ENCODE measurements at regions of chr12 and their contacts with region 1.

Region 1: GRCh38 chr12:54993161-54993835 is 8.7 kb upstream of the TESPA1 start:
- DNase-seq: peak in 8 of 9 donors; percentile 42 to 83 (median 70)
- ATAC-seq: peak; percentile 91
- H3K4me3 ChIP-seq: no peak overlapping the region
- H3K4me3 Mint-ChIP-seq: peak overlapping the region in 4 of 10 donors; percentile 13 to 43 (median 29)
- H3K27ac ChIP-seq: peak overlapping the region; percentile 66
- H3K27ac Mint-ChIP-seq: peak overlapping the region in 8 of 9 donors; percentile 15 to 98 (median 71)
- H3K4me1 ChIP-seq: peaks cover 23 to 37% of the 10 kb centered on the region in 2 donors
- H3K4me1 Mint-ChIP-seq: peaks cover 34 to 59% (median 47%) of the 10 kb centered on the region in 7 donors
- H3K27me3 ChIP-seq: no peaks in the 10 kb centered on the region
- H3K27me3 Mint-ChIP-seq: peaks cover 0 to 4% (median 0%) of the 10 kb centered on the region in 5 donors

Region 2: DNA sequence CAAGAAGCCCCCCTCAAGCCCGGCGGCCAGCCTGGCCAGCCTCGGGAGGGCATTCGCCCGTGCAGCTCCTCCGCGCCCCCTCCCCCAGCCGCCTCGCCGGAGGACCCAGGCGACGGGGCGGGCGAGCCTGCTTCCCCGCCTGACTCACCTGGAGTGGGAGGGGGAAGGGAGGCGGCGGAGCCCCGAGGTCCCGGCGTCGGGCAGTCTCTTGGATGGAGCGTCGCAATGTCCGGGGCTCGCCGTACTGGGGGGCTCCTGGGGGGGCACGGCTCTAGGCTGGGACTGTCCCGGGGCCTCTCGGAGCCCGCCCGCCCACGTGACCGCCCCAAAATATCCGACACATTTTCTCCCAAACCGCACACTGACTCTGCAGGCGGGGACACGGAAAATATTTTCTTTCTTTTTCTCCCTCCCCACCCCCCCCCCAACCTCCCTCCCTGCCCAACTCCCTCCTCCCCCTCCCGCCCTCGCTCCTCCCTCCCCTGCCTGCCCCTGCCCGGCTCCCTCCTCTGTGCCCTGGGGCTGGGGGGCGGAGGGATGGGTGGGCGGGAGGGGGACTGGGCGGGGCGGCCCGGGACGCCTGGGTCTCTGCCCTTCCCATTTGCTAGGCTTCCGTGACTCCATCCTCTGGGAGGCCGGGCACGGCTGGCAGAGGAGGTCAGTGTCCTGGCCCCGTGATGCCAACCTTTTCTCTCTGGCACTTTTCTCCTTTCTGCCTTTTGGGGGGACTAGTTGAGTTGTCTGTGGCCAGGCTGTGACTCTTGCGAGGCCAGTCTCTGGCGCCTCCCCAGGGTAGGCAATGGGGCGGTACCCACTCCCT is 1761.3 kb before region 1 on chr12 and contains the start of gene RARG:
- CTCF ChIA-PET with region 1: no interaction called
- POLR2A ChIA-PET with region 1: no interaction called
- intact Hi-C with region 1: no loop called
- DNase-seq: peak in 3 of 9 donors; percentile 33 to 78 (median 58)
- ATAC-seq: peak; percentile 74
- H3K4me3 ChIP-seq: peak within 1 kb of the TSS; percentile 52
- H3K4me3 Mint-ChIP-seq: peak within 1 kb of the TSS; percentile 83 to 95 (median 88)
- H3K27ac ChIP-seq: peak within 1 kb of the TSS; percentile 56
- H3K27ac Mint-ChIP-seq: peak within 1 kb of the TSS; percentile 77 to 90 (median 86)
- H3K4me1 ChIP-seq: peaks cover 40% of the 10 kb centered on the region in 2 donors
- H3K4me1 Mint-ChIP-seq: peaks cover 38 to 76% (median 67%) of the 10 kb centered on the region in 7 donors
- H3K27me3 ChIP-seq: no peaks in the 10 kb centered on the region
- H3K27me3 Mint-ChIP-seq: no peaks in the 10 kb centered on the region
- total RNA-seq, gene RARG: 22.4 to 73.1 (median 57.4) TPM

Region 3: DNA sequence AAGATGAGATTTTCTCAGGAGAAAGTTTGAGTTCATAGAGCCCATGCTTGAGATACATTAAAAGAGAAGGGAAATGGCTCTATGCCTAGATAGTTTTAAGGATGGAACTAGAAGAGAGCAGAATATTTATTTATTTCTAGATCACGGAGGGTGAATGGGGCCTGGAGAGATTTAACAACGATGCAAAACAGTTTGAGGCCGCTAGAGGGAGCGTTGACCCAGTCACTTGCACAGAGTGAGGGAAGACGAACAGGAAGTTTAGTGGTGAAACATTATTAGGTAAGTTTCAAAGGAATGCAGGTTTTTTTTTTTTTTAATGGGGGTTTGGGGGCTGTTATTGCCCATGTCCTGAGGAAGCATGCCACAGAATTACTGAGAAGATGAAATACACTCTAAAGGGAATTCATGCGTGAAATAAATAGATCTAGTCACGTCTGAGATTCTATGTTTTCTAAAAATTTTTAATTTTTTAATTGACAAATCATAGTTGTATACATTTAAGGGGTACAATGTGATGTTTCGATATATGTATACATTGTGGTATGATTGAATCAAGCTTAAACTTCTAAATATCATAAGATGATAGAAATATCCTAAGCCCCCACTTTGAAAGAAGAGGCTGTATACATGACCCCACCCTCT is 390.0 kb before region 1 on chr12:
- CTCF ChIA-PET with region 1: no interaction called
- POLR2A ChIA-PET with region 1: no interaction called
- intact Hi-C with region 1: loop called in 1 of 2 experiments (anchors 10 kb)
- DNase-seq: peak in 8 of 9 donors; percentile 20 to 68 (median 57)
- ATAC-seq: peak; percentile 93
- H3K4me3 ChIP-seq: no peak overlapping the region
- H3K4me3 Mint-ChIP-seq: peak overlapping the region in 1 of 10 donors; percentile 49
- H3K27ac ChIP-seq: no peak overlapping the region
- H3K27ac Mint-ChIP-seq: peak overlapping the region in 2 of 9 donors; percentile 5 to 33
- H3K4me1 ChIP-seq: no peaks in the 10 kb centered on the region
- H3K4me1 Mint-ChIP-seq: peaks cover 0 to 8% (median 7%) of the 10 kb centered on the region in 7 donors
- H3K27me3 ChIP-seq: no peaks in the 10 kb centered on the region
- H3K27me3 Mint-ChIP-seq: peaks cover 0 to 32% (median 12%) of the 10 kb centered on the region in 5 donors

Region 4: DNA sequence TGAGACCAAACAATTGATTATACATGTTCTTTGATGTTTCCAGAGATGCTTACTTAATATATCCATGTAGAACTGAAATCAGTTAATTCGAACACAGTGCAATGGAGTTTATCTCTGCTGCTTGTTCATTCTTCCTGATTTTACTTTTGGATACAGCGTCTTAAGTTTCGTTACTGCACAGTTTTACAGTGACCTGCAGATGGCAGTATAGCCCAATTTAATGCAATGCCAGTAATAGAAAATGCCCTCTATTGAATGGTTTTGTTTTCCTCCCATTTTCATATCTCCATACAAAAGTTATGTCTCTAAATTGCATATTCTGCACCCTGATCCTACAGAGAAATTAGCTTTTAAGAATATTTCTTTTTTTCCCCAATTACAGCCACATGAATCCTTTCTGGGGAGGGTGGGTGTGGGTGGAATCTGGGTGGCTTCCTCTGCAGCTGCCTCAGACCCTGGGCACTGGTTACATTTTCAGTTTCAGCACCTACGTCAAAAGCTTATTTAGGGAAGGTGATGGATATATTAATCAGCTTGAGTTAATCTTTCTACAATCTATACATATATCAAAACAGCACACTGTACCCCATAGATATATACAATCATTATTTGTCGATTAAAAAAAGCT is 244.0 kb before region 1 on chr12:
- CTCF ChIA-PET with region 1: interaction called, 58 read pairs
- POLR2A ChIA-PET with region 1: interaction called, 3 read pairs
- intact Hi-C with region 1: loop called (anchors 1 kb)
- DNase-seq: peak in 7 of 9 donors; percentile 33 to 73 (median 63)
- ATAC-seq: peak; percentile 91
- H3K4me3 ChIP-seq: no peak overlapping the region
- H3K4me3 Mint-ChIP-seq: peak overlapping the region in 8 of 10 donors; percentile 24 to 79 (median 62)
- H3K27ac ChIP-seq: no peak overlapping the region
- H3K27ac Mint-ChIP-seq: peak overlapping the region in 6 of 9 donors; percentile 33 to 84 (median 55)
- H3K4me1 ChIP-seq: peaks cover 4 to 16% of the 10 kb centered on the region in 2 donors
- H3K4me1 Mint-ChIP-seq: peaks cover 10 to 38% (median 30%) of the 10 kb centered on the region in 7 donors
- H3K27me3 ChIP-seq: no peaks in the 10 kb centered on the region
- H3K27me3 Mint-ChIP-seq: peaks cover 0 to 26% (median 0%) of the 10 kb centered on the region in 5 donors

Region 5: GRCh38 chr12:54853995-54854566 is 139.2 kb before region 1 on chr12 and contains the start of gene MUCL1:
- CTCF ChIA-PET with region 1: interaction called, 32 read pairs
- POLR2A ChIA-PET with region 1: interaction called, 3 read pairs
- intact Hi-C with region 1: loop called (anchors 1 kb)
- DNase-seq: peak; percentile 21 to 79 (median 73)
- ATAC-seq: peak; percentile 99
- H3K4me3 ChIP-seq: no peak within 1 kb of the TSS
- H3K4me3 Mint-ChIP-seq: no peak within 1 kb of the TSS
- H3K27ac ChIP-seq: no peak within 1 kb of the TSS
- H3K27ac Mint-ChIP-seq: peak within 1 kb of the TSS in 2 of 9 donors; percentile 44 to 70
- H3K4me1 ChIP-seq: no peaks in the 10 kb centered on the region
- H3K4me1 Mint-ChIP-seq: peaks cover 0 to 12% (median 5%) of the 10 kb centered on the region in 7 donors
- H3K27me3 ChIP-seq: no peaks in the 10 kb centered on the region
- H3K27me3 Mint-ChIP-seq: peaks cover 0 to 4% (median 0%) of the 10 kb centered on the region in 5 donors
- total RNA-seq, gene MUCL1: not detected

Region 6: DNA sequence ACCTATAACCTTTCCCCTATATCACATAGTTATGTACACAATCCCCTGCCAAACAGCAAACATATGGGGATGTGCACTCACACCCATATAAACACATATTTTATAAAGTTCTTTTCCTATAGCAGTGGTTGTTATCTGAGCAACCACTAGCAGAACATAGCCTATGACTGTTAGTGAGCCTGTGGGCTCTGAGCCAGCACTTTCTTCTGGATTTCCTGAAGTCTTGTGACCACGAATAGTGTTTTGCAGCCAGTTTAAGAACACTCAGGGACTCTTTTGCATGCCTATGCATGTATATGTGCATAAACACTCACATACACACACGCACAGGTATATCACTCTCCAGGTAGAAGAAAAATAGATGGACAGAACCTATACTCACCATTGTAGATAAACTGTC is 25.8 kb before region 1 on chr12:
- CTCF ChIA-PET with region 1: interaction called, 26 read pairs
- POLR2A ChIA-PET with region 1: interaction called, 309 read pairs
- intact Hi-C with region 1: no loop called
- DNase-seq: peak in 5 of 9 donors; percentile 37 to 60 (median 49)
- ATAC-seq: peak; percentile 56
- H3K4me3 ChIP-seq: peak overlapping the region; percentile 2
- H3K4me3 Mint-ChIP-seq: peak overlapping the region; percentile 38 to 88 (median 79)
- H3K27ac ChIP-seq: peak overlapping the region; percentile 57
- H3K27ac Mint-ChIP-seq: peak overlapping the region; percentile 80 to 96 (median 90)
- H3K4me1 ChIP-seq: peaks cover 15 to 65% of the 10 kb centered on the region in 2 donors
- H3K4me1 Mint-ChIP-seq: peaks cover 37 to 95% (median 94%) of the 10 kb centered on the region in 7 donors
- H3K27me3 ChIP-seq: no peaks in the 10 kb centered on the region
- H3K27me3 Mint-ChIP-seq: no peaks in the 10 kb centered on the region

Region 7: DNA sequence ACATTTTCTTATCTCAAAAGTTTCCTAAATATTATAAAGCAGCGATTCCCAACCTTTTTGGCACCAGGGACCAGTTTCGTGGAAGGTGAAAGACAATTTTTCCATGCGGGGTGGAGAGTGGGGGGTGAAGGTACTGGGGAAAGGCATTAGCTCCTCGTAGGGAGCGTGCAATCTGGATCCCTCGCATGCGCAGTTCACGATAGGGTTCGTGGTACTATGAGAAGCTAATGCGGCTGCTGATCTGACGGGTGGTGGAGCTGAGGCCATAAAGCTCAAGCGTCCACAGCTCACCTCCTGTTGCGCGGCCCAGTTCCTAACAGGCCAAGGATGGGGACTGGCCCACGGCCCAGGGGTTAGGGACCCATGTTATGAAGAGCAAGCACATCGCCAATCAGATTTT is 56.4 kb after region 1 on chr12:
- CTCF ChIA-PET with region 1: interaction called, 14 read pairs
- POLR2A ChIA-PET with region 1: no interaction called
- intact Hi-C with region 1: no loop called
- DNase-seq: no peak
- ATAC-seq: no peak
- H3K4me3 ChIP-seq: no peak overlapping the region
- H3K4me3 Mint-ChIP-seq: no peak overlapping the region
- H3K27ac ChIP-seq: no peak overlapping the region
- H3K27ac Mint-ChIP-seq: no peak overlapping the region
- H3K4me1 ChIP-seq: no peaks in the 10 kb centered on the region
- H3K4me1 Mint-ChIP-seq: no peaks in the 10 kb centered on the region
- H3K27me3 ChIP-seq: no peaks in the 10 kb centered on the region
- H3K27me3 Mint-ChIP-seq: peaks cover 0 to 13% (median 0%) of the 10 kb centered on the region in 5 donors

Region 8: GRCh38 chr12:55132816-55133215 is 139.5 kb after region 1 on chr12:
- CTCF ChIA-PET with region 1: no interaction called
- POLR2A ChIA-PET with region 1: no interaction called
- intact Hi-C with region 1: no loop called
- DNase-seq: no peak
- ATAC-seq: no peak
- H3K4me3 ChIP-seq: no peak overlapping the region
- H3K4me3 Mint-ChIP-seq: no peak overlapping the region
- H3K27ac ChIP-seq: no peak overlapping the region
- H3K27ac Mint-ChIP-seq: no peak overlapping the region
- H3K4me1 ChIP-seq: no peaks in the 10 kb centered on the region
- H3K4me1 Mint-ChIP-seq: no peaks in the 10 kb centered on the region
- H3K27me3 ChIP-seq: peaks cover 0 to 5% of the 10 kb centered on the region in 2 donors
- H3K27me3 Mint-ChIP-seq: peaks cover 40 to 66% (median 58%) of the 10 kb centered on the region in 5 donors

Measured in naive thymus-derived CD4-positive, alpha-beta T cell (primary cell).